Activated CD8-positive, alpha-beta T cell treated with anti-CD3 and anti-CD28 coated beads for 36 hours (primary cell): ENCODE measurements at regions of chr1 and their contacts with region 1.

Region 1: DNA sequence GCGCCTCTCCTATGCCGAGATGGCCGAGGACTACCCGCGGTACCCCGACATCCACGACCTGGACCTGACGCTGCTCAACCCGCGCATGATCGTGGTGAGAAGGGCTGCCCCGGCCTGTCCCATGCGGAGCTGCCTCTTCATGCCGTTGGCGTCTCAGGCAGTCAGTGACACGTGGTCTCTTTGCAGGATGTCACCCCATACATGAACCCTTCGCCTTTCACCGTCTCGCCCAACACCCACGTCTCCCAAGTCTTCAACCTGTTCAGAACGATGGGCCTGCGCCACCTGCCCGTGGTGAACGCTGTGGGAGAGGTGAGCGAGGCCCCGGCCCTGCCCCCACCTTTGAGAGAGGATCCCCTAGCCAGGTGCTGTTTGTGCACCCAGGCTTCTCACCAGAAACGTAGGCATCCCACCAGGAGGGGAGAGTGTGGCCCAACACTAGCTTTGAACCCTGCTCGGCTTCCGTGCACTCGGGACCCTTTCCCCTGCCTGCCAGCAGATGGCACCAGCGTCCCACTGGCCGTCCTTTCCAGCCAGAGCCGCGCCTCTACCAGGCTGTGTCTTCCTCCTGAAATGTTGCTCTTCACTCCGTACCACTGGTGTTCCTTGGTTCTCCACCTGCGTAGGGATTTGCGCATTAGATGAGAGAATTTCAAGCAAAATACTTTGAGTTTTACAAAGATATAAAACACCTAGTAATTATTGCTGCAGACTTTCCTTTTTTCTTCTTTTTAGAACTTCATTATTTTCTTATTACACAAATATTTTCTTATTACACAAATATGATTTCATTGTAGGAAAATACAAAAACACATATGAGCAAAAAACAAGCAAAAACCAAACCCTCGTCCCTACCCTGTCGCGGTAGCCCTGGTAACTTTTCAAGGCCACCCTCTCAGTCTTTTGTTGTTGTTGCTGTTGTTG is 9.0 kb downstream of the NPPA start:
- DNase-seq: peak; percentile 73
- ATAC-seq: peak; percentile 97
- H3K4me3 Mint-ChIP-seq: no peak overlapping the region
- H3K27ac Mint-ChIP-seq: no peak overlapping the region
- H3K4me1 Mint-ChIP-seq: no peaks in the 10 kb centered on the region
- H3K27me3 Mint-ChIP-seq: no peaks in the 10 kb centered on the region
- CTCF ChIP-seq: peak; percentile 99

Region 2: GRCh38 chr1:11822096-11822495 is 16.5 kb before region 1 on chr1:
- CTCF ChIA-PET with region 1: interaction called, 13 read pairs
- POLR2A ChIA-PET with region 1: no interaction called
- intact Hi-C with region 1: no loop called
- DNase-seq: no peak
- ATAC-seq: no peak
- H3K4me3 Mint-ChIP-seq: no peak overlapping the region
- H3K27ac Mint-ChIP-seq: no peak overlapping the region
- H3K4me1 Mint-ChIP-seq: no peaks in the 10 kb centered on the region
- H3K27me3 Mint-ChIP-seq: no peaks in the 10 kb centered on the region
- CTCF ChIP-seq: no peak

Region 3: GRCh38 chr1:11858968-11859871 is 20.6 kb after region 1 on chr1:
- CTCF ChIA-PET with region 1: interaction called, 11 read pairs
- POLR2A ChIA-PET with region 1: no interaction called
- intact Hi-C with region 1: no loop called
- DNase-seq: peak; percentile 83
- ATAC-seq: peak; percentile 91
- H3K4me3 Mint-ChIP-seq: no peak overlapping the region
- H3K27ac Mint-ChIP-seq: no peak overlapping the region
- H3K4me1 Mint-ChIP-seq: peaks cover 5% of the 10 kb centered on the region
- H3K27me3 Mint-ChIP-seq: peaks cover 46% of the 10 kb centered on the region
- CTCF ChIP-seq: peak; percentile 21

Region 4: DNA sequence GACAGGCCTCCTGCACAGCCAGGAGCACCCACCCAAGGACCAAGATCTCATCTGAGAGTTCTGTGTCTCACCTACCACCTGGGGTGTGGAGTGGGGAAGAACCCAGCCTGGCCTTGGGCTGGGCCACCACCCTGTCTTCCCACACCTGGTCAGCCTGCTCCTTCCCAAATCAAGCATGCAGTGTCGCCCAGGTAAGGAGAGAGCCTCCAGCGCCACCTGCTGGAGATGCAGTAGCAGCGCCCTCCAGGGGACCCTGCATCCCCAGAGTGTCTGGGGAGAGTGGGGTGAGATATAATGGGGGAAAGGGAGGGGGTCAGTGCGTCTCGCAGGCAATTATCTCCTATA is 55.3 kb after region 1 on chr1:
- CTCF ChIA-PET with region 1: interaction called, 45 read pairs
- POLR2A ChIA-PET with region 1: no interaction called
- intact Hi-C with region 1: loop called (anchors 5 kb)
- DNase-seq: peak; percentile 72
- ATAC-seq: peak; percentile 96
- H3K4me3 Mint-ChIP-seq: no peak overlapping the region
- H3K27ac Mint-ChIP-seq: no peak overlapping the region
- H3K4me1 Mint-ChIP-seq: no peaks in the 10 kb centered on the region
- H3K27me3 Mint-ChIP-seq: peaks cover 26% of the 10 kb centered on the region
- CTCF ChIP-seq: peak; percentile 87